ENCODE measurements at regions of chr2 and their contacts with region 1.

Region 1: GRCh38 chr2:21118302-21118920 is 5.4 kb upstream of the TDRD15 start:
- DNase-seq: peak; percentile 75
- H3K4me3 ChIP-seq: no peak overlapping the region
- H3K27ac ChIP-seq: no peak overlapping the region
- H3K4me1 ChIP-seq: no peaks in the 10 kb centered on the region
- H3K27me3 ChIP-seq: no peaks in the 10 kb centered on the region
- CTCF ChIP-seq: peak; percentile 70
- EP300 ChIP-seq: no peak
- RAD21 ChIP-seq: peak; percentile 97

Region 2: DNA sequence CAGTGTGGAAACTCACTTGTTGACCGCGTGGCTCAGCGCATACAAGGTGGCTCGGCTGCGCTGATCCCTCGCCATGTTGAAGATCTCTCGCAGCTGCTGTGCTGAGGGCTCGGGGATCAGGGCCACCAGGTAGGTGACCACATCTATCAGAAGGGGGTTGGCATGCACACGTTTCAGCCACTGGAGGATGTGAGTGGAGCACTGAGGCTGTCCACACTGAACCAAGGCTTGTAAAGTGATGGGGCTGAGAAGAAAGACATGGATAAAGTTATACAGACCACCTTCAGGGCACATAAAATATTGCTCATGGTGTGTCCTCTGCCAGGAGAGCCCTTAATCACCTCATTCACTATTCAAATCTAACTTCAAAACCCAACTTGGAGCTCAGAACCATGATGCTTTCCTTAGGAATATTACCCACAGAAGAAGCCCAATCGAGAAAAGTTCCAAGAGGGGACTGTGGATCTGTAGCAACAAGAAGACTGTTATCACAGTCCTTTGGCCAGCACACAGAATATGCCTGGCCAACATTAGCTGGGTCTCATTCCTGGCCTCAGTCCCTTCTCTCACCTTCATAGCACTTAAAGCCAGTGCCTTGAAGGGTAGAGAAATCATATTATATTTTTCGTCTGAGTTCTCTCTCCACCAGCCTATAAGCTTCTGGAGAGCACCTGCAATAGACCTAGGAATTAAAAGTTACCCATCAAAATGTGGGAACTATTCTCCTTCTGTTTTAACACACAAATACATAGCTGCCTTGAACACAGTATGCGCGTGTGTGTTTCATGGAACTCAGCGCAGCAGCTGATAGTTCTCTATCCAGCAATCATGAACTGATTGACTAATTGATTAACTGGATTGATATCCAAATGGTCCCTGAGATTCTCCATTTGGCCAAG is 85.8 kb before region 1 on chr2:
- CTCF ChIA-PET with region 1: interaction called, 19 read pairs
- POLR2A ChIA-PET with region 1: no interaction called
- DNase-seq: no peak
- H3K4me3 ChIP-seq: no peak overlapping the region
- H3K27ac ChIP-seq: no peak overlapping the region
- H3K4me1 ChIP-seq: no peaks in the 10 kb centered on the region
- H3K27me3 ChIP-seq: no peaks in the 10 kb centered on the region
- CTCF ChIP-seq: no peak
- EP300 ChIP-seq: no peak
- RAD21 ChIP-seq: no peak

Region 3: DNA sequence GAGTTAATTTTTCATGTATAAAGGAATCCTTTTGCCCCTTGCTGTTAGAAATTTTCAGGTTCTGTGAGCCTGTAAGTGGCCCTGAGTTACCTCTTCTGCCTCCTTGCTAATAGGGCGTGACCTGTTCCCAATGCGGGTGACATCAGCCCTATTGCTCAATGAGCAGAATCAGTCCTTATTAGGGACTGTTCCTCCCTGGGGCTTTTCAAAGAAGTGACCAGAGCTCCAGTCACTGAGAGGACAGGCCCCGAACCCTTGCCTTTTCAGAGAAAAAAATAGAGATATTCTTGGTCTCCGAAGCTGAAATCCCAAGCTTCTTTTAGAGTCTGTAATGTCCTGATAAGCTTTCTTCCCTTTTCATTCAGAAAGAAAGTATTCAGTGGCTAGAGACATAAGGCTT is 66.4 kb before region 1 on chr2:
- CTCF ChIA-PET with region 1: interaction called, 315 read pairs
- POLR2A ChIA-PET with region 1: no interaction called
- DNase-seq: no peak
- H3K4me3 ChIP-seq: no peak overlapping the region
- H3K27ac ChIP-seq: no peak overlapping the region
- H3K4me1 ChIP-seq: peaks cover 0 to 10% of the 10 kb centered on the region in 2 experiments; a peak in 2 of 4 replicates
- H3K27me3 ChIP-seq: no peaks in the 10 kb centered on the region
- CTCF ChIP-seq: no peak
- EP300 ChIP-seq: no peak
- RAD21 ChIP-seq: no peak

Region 4: GRCh38 chr2:21084401-21084800 is 34.0 kb before region 1 on chr2:
- CTCF ChIA-PET with region 1: interaction called, 11 read pairs
- POLR2A ChIA-PET with region 1: no interaction called
- DNase-seq: no peak
- H3K4me3 ChIP-seq: no peak overlapping the region
- H3K27ac ChIP-seq: no peak overlapping the region
- H3K4me1 ChIP-seq: no peaks in the 10 kb centered on the region
- H3K27me3 ChIP-seq: no peaks in the 10 kb centered on the region
- CTCF ChIP-seq: no peak
- EP300 ChIP-seq: no peak
- RAD21 ChIP-seq: no peak

Region 5: GRCh38 chr2:21104030-21104660 is 14.3 kb before region 1 on chr2:
- CTCF ChIA-PET with region 1: interaction called, 12 read pairs
- POLR2A ChIA-PET with region 1: no interaction called
- DNase-seq: no peak
- H3K4me3 ChIP-seq: no peak overlapping the region
- H3K27ac ChIP-seq: no peak overlapping the region
- H3K4me1 ChIP-seq: no peaks in the 10 kb centered on the region
- H3K27me3 ChIP-seq: no peaks in the 10 kb centered on the region
- CTCF ChIP-seq: no peak
- EP300 ChIP-seq: no peak
- RAD21 ChIP-seq: no peak

Region 6: GRCh38 chr2:21165350-21165749 is 46.9 kb after region 1 on chr2:
- CTCF ChIA-PET with region 1: interaction called, 14 read pairs
- POLR2A ChIA-PET with region 1: no interaction called
- DNase-seq: peak; percentile 34
- H3K4me3 ChIP-seq: no peak overlapping the region
- H3K27ac ChIP-seq: no peak overlapping the region
- H3K4me1 ChIP-seq: no peaks in the 10 kb centered on the region; a peak in 1 of 4 replicates
- H3K27me3 ChIP-seq: no peaks in the 10 kb centered on the region
- CTCF ChIP-seq: peak; percentile 44
- EP300 ChIP-seq: no peak
- RAD21 ChIP-seq: peak; percentile 67

Measured in SK-N-SH (cell line).